ENCODE measurements at regions of chr11 and their contacts with region 1.

Region 1: GRCh38 chr11:61021661-61022212 is 50.3 kb downstream of the CD6 start:
- DNase-seq: peak; percentile 92 to 99 (median 94)
- H3K4me3 ChIP-seq: peak overlapping the region; percentile 40 to 41
- H3K4me3 Mint-ChIP-seq: peak overlapping the region; percentile 60 to 81 (median 72)
- H3K27ac ChIP-seq: peak overlapping the region; percentile 83
- H3K27ac Mint-ChIP-seq: peak overlapping the region; percentile 97 to 100 (median 99)
- H3K4me1 ChIP-seq: peaks cover 76% of the 10 kb centered on the region
- H3K4me1 Mint-ChIP-seq: peaks cover 60 to 85% (median 71%) of the 10 kb centered on the region in 4 donors
- H3K27me3 ChIP-seq: no peaks in the 10 kb centered on the region
- H3K27me3 Mint-ChIP-seq: no peaks in the 10 kb centered on the region

Region 2: GRCh38 chr11:60944490-60945294 is 77.0 kb before region 1 on chr11:
- CTCF ChIA-PET with region 1: no interaction called
- POLR2A ChIA-PET with region 1: no interaction called
- intact Hi-C with region 1: no loop called
- DNase-seq: no peak
- H3K4me3 ChIP-seq: no peak overlapping the region
- H3K4me3 Mint-ChIP-seq: peak overlapping the region in 1 of 8 donors; percentile 30
- H3K27ac ChIP-seq: no peak overlapping the region
- H3K27ac Mint-ChIP-seq: peak overlapping the region in 1 of 7 donors; percentile 77
- H3K4me1 ChIP-seq: no peaks in the 10 kb centered on the region
- H3K4me1 Mint-ChIP-seq: peaks cover 2 to 6% (median 3%) of the 10 kb centered on the region in 4 donors
- H3K27me3 ChIP-seq: peaks cover 3% of the 10 kb centered on the region
- H3K27me3 Mint-ChIP-seq: peaks cover 3 to 7% of the 10 kb centered on the region in 2 donors

Region 3: GRCh38 chr11:60959431-60959830 is 62.3 kb before region 1 on chr11:
- CTCF ChIA-PET with region 1: no interaction called
- POLR2A ChIA-PET with region 1: no interaction called
- intact Hi-C with region 1: no loop called
- DNase-seq: no peak
- H3K4me3 ChIP-seq: no peak overlapping the region
- H3K4me3 Mint-ChIP-seq: peak overlapping the region in 1 of 8 donors; percentile 41
- H3K27ac ChIP-seq: no peak overlapping the region
- H3K27ac Mint-ChIP-seq: no peak overlapping the region
- H3K4me1 ChIP-seq: no peaks in the 10 kb centered on the region
- H3K4me1 Mint-ChIP-seq: no peaks in the 10 kb centered on the region
- H3K27me3 ChIP-seq: no peaks in the 10 kb centered on the region
- H3K27me3 Mint-ChIP-seq: peaks cover 1% of the 10 kb centered on the region in 2 donors

Region 4: DNA sequence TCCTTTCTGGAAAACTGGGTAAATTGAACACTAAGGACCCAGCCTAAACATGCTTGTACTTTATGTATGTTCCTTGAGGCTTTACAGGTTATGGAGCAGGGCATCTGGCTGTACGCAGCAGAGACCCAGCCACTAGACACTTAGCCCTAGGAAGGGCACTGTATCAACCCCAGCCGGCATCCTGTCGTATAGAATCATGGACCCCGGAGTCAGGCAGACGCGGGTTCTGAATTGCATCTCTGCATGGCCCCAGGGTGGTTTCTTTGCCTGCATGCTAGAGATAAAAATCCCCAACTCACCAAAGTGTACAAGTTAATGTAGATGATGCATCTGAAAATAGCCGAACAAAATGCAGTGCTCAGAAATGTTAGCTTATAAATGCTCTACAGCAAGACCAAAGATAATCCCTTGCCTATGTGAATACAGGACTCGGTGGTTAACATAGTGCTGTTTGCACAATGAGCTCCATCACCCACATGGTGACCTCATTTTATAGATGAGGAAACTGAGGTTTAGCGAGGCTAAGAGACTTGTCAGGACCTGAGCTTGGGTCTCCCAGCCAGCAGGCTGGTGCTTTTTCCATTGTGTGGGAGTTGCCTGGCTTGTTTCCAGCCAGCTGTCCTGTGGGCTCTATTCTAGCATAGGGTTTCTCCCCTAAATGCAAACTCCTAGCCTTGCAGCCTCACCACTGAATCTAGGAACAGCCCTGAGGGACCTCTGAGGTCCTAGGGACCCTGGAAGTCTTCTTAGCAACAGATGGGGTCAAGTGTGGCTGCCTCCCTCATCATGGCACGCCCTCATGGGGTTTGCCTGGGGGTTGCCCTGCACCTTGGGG is 43.0 kb before region 1 on chr11:
- CTCF ChIA-PET with region 1: interaction called, 3 read pairs
- POLR2A ChIA-PET with region 1: interaction called, 73 read pairs
- intact Hi-C with region 1: no loop called
- DNase-seq: peak; percentile 49 to 82 (median 52)
- H3K4me3 ChIP-seq: peak overlapping the region in 1 of 2 donors; percentile 28
- H3K4me3 Mint-ChIP-seq: peak overlapping the region; percentile 81 to 98 (median 86)
- H3K27ac ChIP-seq: peak overlapping the region; percentile 92
- H3K27ac Mint-ChIP-seq: peak overlapping the region; percentile 88 to 100 (median 97)
- H3K4me1 ChIP-seq: peaks cover 91% of the 10 kb centered on the region
- H3K4me1 Mint-ChIP-seq: peaks cover 55 to 98% (median 77%) of the 10 kb centered on the region in 4 donors
- H3K27me3 ChIP-seq: no peaks in the 10 kb centered on the region
- H3K27me3 Mint-ChIP-seq: no peaks in the 10 kb centered on the region

Region 5: GRCh38 chr11:60992842-60993409 is 28.8 kb before region 1 on chr11:
- CTCF ChIA-PET with region 1: no interaction called
- POLR2A ChIA-PET with region 1: interaction called, 73 read pairs
- intact Hi-C with region 1: no loop called
- DNase-seq: peak in 1 of 5 donors; percentile 7
- H3K4me3 ChIP-seq: no peak overlapping the region
- H3K4me3 Mint-ChIP-seq: peak overlapping the region; percentile 34 to 81 (median 78)
- H3K27ac ChIP-seq: peak overlapping the region; percentile 51
- H3K27ac Mint-ChIP-seq: peak overlapping the region; percentile 84 to 96 (median 94)
- H3K4me1 ChIP-seq: peaks cover 92% of the 10 kb centered on the region
- H3K4me1 Mint-ChIP-seq: peaks cover 53 to 86% (median 72%) of the 10 kb centered on the region in 4 donors
- H3K27me3 ChIP-seq: no peaks in the 10 kb centered on the region
- H3K27me3 Mint-ChIP-seq: no peaks in the 10 kb centered on the region

Region 6: DNA sequence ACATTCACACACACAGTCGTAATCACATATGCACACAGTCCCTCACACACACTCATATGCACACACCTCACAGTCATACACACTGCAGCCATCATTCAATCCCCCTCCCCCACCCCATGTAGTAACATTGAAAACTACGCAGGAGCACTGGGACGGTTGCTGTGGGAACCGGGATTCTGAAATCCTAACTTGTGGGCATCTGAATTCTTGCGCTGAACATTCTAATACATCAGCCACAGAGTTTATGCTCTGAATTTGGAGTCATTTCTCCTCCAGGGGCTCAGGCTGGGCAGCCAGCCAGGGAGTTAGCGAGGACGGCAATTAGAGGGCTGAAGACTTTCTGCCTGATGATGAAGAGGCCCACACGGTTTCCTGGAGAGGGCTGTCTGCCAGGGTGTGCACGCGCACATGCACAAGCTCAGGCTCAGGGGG is 17.5 kb before region 1 on chr11:
- CTCF ChIA-PET with region 1: no interaction called
- POLR2A ChIA-PET with region 1: interaction called, 74 read pairs
- intact Hi-C with region 1: loop called (anchors 2 kb)
- DNase-seq: peak in 3 of 5 donors; percentile 47 to 76 (median 60)
- H3K4me3 ChIP-seq: peak overlapping the region; percentile 5 to 14
- H3K4me3 Mint-ChIP-seq: peak overlapping the region; percentile 63 to 87 (median 83)
- H3K27ac ChIP-seq: peak overlapping the region; percentile 54
- H3K27ac Mint-ChIP-seq: peak overlapping the region; percentile 89 to 97 (median 95)
- H3K4me1 ChIP-seq: peaks cover 93% of the 10 kb centered on the region
- H3K4me1 Mint-ChIP-seq: peaks cover 51 to 90% (median 66%) of the 10 kb centered on the region in 4 donors
- H3K27me3 ChIP-seq: no peaks in the 10 kb centered on the region
- H3K27me3 Mint-ChIP-seq: no peaks in the 10 kb centered on the region

Region 7: DNA sequence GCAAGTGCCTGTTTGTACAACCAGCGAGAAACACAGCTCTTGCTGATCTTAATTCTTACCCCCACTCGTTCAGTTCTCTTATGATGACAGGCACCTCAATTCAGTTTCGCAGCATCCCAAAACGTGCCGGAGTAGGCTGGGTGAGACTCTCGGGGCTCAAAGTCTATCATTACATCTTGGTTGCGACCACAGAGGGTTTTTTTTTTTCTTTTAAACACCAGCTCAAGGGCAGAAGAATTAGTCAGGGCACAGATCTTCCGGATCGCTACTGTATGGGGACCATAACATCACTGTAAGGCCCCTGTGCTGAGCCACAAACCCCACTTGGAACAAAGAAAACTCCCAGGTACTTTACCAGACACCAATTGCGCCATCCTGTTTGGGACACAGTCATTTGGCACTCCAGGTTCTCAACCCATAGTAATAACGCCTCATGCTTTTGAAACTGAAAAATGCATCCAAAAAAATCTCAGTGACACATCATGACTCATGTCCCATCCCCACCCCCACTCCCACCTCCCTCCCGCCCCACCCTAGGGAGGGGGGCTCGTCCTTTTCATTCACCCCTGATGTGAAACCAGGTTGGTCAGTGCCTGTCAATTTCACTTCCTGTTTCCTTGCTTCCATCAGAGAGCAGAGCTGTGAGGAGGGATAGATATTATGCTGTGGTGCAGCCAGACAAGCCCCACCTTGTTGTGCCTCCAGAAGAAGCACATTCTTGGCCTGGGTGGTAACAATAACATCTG is 39.5 kb after region 1 on chr11:
- CTCF ChIA-PET with region 1: interaction called, 3 read pairs
- POLR2A ChIA-PET with region 1: interaction called, 38 read pairs
- intact Hi-C with region 1: loop called (anchors 1 kb)
- DNase-seq: peak; percentile 60 to 97 (median 65)
- H3K4me3 ChIP-seq: peak overlapping the region; percentile 17 to 48
- H3K4me3 Mint-ChIP-seq: peak overlapping the region; percentile 72 to 93 (median 86)
- H3K27ac ChIP-seq: peak overlapping the region; percentile 69
- H3K27ac Mint-ChIP-seq: peak overlapping the region; percentile 94 to 99 (median 97)
- H3K4me1 ChIP-seq: peaks cover 75% of the 10 kb centered on the region
- H3K4me1 Mint-ChIP-seq: peaks cover 59 to 91% (median 66%) of the 10 kb centered on the region in 4 donors
- H3K27me3 ChIP-seq: no peaks in the 10 kb centered on the region
- H3K27me3 Mint-ChIP-seq: no peaks in the 10 kb centered on the region

Region 8: GRCh38 chr11:61071208-61071681 is 49.5 kb after region 1 on chr11:
- CTCF ChIA-PET with region 1: interaction called, 3 read pairs
- POLR2A ChIA-PET with region 1: interaction called, 253 read pairs
- intact Hi-C with region 1: loop called (anchors 1 kb)
- DNase-seq: peak; percentile 61 to 77 (median 72)
- H3K4me3 ChIP-seq: peak overlapping the region in 1 of 2 donors; percentile 21
- H3K4me3 Mint-ChIP-seq: peak overlapping the region; percentile 60 to 89 (median 79)
- H3K27ac ChIP-seq: peak overlapping the region; percentile 63
- H3K27ac Mint-ChIP-seq: peak overlapping the region; percentile 92 to 98 (median 96)
- H3K4me1 ChIP-seq: peaks cover 98% of the 10 kb centered on the region
- H3K4me1 Mint-ChIP-seq: peaks cover 50 to 92% (median 74%) of the 10 kb centered on the region in 4 donors
- H3K27me3 ChIP-seq: no peaks in the 10 kb centered on the region
- H3K27me3 Mint-ChIP-seq: no peaks in the 10 kb centered on the region

Region 9: DNA sequence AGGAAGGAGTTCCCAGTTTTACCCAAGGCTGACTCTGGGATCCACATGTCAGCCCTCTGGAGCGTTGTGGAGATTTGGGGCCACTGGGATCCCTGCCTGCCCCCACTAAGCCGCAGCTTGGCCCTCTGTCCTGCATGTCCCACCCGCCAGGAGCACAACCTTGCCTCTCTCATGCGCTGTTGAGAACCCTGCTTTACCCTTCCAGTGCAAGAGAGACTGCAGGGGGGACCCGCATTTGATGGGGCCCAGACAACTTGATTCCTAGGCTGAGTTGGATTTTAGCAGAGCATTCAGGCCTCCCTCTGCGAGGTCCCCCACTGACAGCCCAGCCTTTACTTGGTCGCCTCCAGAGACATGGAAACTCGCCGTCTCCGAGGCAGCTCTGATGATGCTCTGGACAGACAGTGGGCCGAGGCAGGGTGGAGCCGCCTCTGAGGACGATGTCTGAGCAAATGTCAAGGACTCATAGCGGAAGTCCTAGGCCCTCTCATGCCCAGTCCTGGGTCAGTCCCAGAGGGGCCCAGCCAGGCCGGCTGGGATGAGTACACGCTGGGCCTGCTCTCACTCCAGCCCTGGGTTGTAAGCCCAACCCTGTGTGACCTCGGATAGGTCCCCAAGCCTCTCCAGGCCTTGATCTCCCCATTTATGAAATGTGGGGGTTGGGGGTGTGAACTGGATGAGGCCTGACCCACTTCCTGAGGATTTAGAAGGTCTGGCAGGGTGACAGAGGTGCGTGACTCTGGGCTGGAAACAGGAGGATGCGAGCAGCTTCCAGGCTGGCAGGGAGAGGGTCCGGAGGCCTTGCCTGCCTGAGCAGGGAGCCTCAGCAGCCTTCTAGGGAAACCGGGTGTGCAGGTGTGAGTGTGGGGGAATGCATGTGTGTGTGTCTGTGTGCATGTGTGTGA is 81.2 kb after region 1 on chr11:
- CTCF ChIA-PET with region 1: no interaction called
- POLR2A ChIA-PET with region 1: interaction called, 21 read pairs
- intact Hi-C with region 1: loop called (anchors 5 kb)
- DNase-seq: peak; percentile 34 to 63 (median 47)
- H3K4me3 ChIP-seq: peak overlapping the region; percentile 99 to 100
- H3K4me3 Mint-ChIP-seq: no peak overlapping the region
- H3K27ac ChIP-seq: peak overlapping the region; percentile 100
- H3K27ac Mint-ChIP-seq: no peak overlapping the region
- H3K4me1 ChIP-seq: peaks cover 64% of the 10 kb centered on the region
- H3K4me1 Mint-ChIP-seq: peaks cover 0 to 47% (median 28%) of the 10 kb centered on the region in 4 donors
- H3K27me3 ChIP-seq: no peaks in the 10 kb centered on the region
- H3K27me3 Mint-ChIP-seq: no peaks in the 10 kb centered on the region

Measured in CD4-positive, alpha-beta memory T cell (primary cell).